Activated CD4-positive, alpha-beta memory T cell treated with anti-CD3 and anti-CD28 coated beads for 36 hours (primary cell): ENCODE measurements at regions of chr9 and their contacts with region 1.

Region 1: GRCh38 chr9:136728080-136728547 is 14.6 kb downstream of the LCN10 start:
- DNase-seq: peak; percentile 93
- H3K4me3 Mint-ChIP-seq: peak overlapping the region; percentile 99
- H3K27ac Mint-ChIP-seq: no peak overlapping the region
- H3K4me1 Mint-ChIP-seq: peaks cover 38% of the 10 kb centered on the region
- H3K27me3 Mint-ChIP-seq: no peaks in the 10 kb centered on the region

Region 2: DNA sequence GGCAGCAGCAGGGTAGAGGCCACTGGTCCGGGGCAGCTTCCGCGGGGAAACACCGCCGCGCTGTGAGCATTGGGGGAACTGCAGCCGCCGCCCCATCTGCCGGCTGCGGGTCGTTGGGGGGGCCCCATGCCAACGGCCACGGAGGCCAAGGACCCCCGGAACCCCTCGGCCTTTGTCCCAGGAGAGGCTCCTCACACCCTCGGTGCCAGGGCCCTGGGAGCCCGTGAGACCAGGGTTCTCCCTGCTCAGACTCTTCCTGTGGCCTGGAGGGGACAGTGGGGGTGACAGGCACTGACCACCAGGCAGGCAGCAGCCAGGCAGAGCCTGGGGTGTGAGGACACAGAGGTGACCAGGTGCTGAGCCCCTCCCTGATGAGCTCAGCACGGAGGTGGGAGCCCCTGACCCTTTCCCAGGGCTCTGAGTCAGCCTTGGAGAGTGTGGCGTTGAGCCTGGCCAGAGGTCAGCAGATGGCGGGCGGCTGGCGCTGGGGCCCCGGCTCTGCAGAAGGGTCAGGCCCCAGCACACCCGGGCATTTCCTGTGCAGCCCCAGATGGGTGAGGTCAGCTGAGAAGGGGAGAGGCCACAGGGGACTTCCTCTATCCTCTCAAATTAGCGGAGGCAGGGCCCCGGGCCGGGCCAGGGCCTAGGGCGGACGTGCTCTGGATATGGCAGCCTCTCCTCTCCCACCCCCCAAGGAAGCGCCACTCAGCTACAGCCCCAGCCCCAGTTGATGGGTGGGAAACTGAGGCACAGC is 83.3 kb before region 1 on chr9:
- CTCF ChIA-PET with region 1: no interaction called
- POLR2A ChIA-PET with region 1: no interaction called
- intact Hi-C with region 1: no loop called
- DNase-seq: peak; percentile 80
- H3K4me3 Mint-ChIP-seq: no peak overlapping the region
- H3K27ac Mint-ChIP-seq: no peak overlapping the region
- H3K4me1 Mint-ChIP-seq: no peaks in the 10 kb centered on the region
- H3K27me3 Mint-ChIP-seq: peaks cover 22% of the 10 kb centered on the region

Region 3: DNA sequence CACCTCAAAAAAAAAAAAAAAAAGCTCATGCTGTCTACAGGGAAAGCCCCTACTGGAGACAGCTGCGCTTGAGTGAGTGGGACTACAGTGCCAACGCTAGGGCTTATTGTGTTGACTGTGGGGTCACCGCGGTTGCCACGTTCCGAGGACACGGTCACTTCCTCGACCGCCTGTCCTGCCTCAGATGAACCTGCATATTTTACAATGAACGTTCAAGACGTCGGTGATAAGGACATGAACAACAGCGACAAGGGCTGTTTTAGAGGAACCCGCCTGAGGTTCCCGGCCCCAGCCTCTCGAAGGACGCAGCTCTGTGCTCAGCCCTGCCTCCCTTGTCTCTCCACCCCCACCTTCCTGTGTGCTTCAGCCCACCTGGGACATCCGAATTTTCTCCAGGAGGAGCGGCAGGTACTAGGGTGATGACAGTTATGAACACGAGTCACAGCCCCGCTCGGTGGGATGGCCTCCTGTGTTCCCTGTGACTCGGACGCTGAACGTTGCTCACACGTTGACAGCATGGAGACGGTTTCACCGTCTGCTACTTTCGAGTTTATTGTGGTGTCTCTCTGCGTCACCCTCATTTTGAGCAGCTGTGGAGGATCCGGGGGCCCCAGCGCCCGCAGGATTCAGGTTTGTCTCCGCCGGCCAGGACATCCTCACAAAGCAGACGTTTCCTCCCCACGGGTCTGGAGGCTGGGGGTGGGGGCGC is 27.0 kb before region 1 on chr9:
- CTCF ChIA-PET with region 1: interaction called, 13 read pairs
- POLR2A ChIA-PET with region 1: interaction called, 9 read pairs
- intact Hi-C with region 1: loop called (anchors 2 kb)
- DNase-seq: peak; percentile 90
- H3K4me3 Mint-ChIP-seq: peak overlapping the region; percentile 71
- H3K27ac Mint-ChIP-seq: peak overlapping the region; percentile 86
- H3K4me1 Mint-ChIP-seq: peaks cover 18% of the 10 kb centered on the region
- H3K27me3 Mint-ChIP-seq: peaks cover 23% of the 10 kb centered on the region

Region 4: GRCh38 chr9:136713548-136714457 is 14.3 kb before region 1 on chr9:
- CTCF ChIA-PET with region 1: interaction called, 12 read pairs
- POLR2A ChIA-PET with region 1: interaction called, 25 read pairs
- intact Hi-C with region 1: no loop called
- DNase-seq: no peak
- H3K4me3 Mint-ChIP-seq: no peak overlapping the region
- H3K27ac Mint-ChIP-seq: no peak overlapping the region
- H3K4me1 Mint-ChIP-seq: no peaks in the 10 kb centered on the region
- H3K27me3 Mint-ChIP-seq: peaks cover 29% of the 10 kb centered on the region

Region 5: DNA sequence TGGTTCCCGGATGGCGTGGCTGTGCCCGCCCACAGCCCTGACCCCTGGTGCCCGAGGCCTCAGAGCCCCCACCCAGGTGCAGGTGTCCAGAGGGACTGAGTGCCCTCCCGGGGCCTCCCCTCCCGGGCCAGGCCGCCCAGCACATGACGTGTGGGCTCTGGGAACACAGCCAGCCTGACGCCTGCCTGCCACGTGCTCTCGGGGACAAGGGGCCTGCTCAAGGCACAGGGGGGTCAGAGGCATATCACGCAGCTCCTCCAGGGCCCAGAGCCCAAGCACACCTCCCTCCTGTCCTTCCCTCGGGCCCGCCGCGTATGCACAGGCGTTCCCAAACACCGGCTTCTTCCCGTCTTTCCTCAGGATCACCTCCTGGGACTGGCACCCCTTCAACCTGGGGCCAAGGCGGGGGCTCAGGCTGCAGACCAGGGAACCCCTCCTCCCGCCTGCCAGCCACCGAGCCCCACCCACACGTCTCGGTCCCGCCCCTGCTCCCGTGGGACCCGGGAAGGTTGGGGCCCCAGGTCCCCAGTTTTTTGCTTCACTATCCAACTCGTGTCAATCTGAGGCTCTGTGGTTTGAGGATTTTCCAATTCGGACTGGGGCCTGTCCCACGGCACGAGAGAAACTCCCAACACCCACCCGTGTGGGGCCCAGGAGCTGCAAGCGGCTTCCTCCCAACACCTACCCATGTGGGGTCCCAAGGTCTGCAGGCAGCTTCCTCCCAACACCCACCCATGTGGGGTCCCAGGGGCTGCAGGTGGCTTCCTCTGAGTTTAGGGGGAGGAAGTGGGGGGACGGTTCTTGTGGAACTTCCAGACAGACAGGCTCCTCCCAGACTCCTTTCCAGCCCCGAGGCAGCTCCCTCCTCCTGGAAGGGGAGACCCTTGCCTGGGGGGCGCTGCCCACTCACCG is 13.1 kb after region 1 on chr9:
- CTCF ChIA-PET with region 1: interaction called, 6 read pairs
- POLR2A ChIA-PET with region 1: interaction called, 10 read pairs
- intact Hi-C with region 1: no loop called
- DNase-seq: peak; percentile 25
- H3K4me3 Mint-ChIP-seq: peak overlapping the region; percentile 49
- H3K27ac Mint-ChIP-seq: no peak overlapping the region
- H3K4me1 Mint-ChIP-seq: peaks cover 12% of the 10 kb centered on the region
- H3K27me3 Mint-ChIP-seq: no peaks in the 10 kb centered on the region

Region 6: GRCh38 chr9:136750526-136750925 is 22.4 kb after region 1 on chr9:
- CTCF ChIA-PET with region 1: interaction called, 10 read pairs
- POLR2A ChIA-PET with region 1: interaction called, 3 read pairs
- intact Hi-C with region 1: no loop called
- DNase-seq: no peak
- H3K4me3 Mint-ChIP-seq: no peak overlapping the region
- H3K27ac Mint-ChIP-seq: no peak overlapping the region
- H3K4me1 Mint-ChIP-seq: peaks cover 9% of the 10 kb centered on the region
- H3K27me3 Mint-ChIP-seq: peaks cover 9% of the 10 kb centered on the region